Activated CD4-positive, alpha-beta memory T cell treated with anti-CD3 and anti-CD28 coated beads, Interleukin-2, amount 10 ng/mL, durations not matched to agents 7 days and 5 days (primary cell): ENCODE measurements at regions of chr12 and their contacts with region 1.

Region 1: GRCh38 chr12:31272607-31273225 is 53.2 kb downstream of the SINHCAF start:
- DNase-seq: no peak
- H3K4me3 Mint-ChIP-seq: no peak overlapping the region
- H3K27ac Mint-ChIP-seq: no peak overlapping the region
- H3K4me1 Mint-ChIP-seq: no peaks in the 10 kb centered on the region
- H3K27me3 Mint-ChIP-seq: no peaks in the 10 kb centered on the region

Region 2: GRCh38 chr12:30847259-30847658 is 425.5 kb before region 1 on chr12:
- CTCF ChIA-PET with region 1: interaction called, 43 read pairs
- POLR2A ChIA-PET with region 1: interaction called, 8 read pairs
- DNase-seq: peak; percentile 20
- H3K4me3 Mint-ChIP-seq: no peak overlapping the region
- H3K27ac Mint-ChIP-seq: no peak overlapping the region
- H3K4me1 Mint-ChIP-seq: peaks cover 6% of the 10 kb centered on the region
- H3K27me3 Mint-ChIP-seq: peaks cover 2% of the 10 kb centered on the region

Region 3: DNA sequence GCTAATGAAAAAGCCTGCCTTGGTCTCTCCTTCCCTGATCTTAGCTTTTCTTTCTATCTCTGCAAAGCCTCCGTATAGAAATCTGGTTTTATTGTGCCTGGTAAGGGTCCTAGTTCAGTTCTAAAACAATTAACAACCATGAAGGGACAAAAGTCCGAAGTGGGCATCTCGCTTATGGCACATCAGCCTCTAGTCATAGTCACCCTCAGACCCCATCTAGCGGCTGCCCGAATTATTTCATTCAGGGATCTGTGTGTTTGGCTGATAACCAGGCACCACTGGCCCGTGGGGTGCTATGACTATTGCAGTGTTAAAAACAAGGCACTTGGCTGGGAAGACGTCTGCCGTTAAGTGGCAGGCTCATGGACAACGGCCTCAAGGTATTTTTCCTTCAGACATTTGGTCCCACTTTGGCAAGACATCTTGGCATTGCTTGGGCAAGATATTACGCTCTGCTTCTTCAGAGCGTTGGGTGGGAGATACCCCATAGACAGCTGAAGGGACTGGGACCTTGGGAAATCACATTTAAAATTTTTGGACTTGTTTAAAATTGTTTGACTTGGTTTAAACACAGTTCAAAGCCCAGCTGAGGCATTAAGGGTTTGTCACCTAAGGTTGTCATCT is 33.8 kb before region 1 on chr12:
- CTCF ChIA-PET with region 1: interaction called, 18 read pairs
- POLR2A ChIA-PET with region 1: no interaction called
- DNase-seq: peak; percentile 75
- H3K4me3 Mint-ChIP-seq: no peak overlapping the region
- H3K27ac Mint-ChIP-seq: no peak overlapping the region
- H3K4me1 Mint-ChIP-seq: peaks cover 14% of the 10 kb centered on the region
- H3K27me3 Mint-ChIP-seq: peaks cover 36% of the 10 kb centered on the region

Region 4: DNA sequence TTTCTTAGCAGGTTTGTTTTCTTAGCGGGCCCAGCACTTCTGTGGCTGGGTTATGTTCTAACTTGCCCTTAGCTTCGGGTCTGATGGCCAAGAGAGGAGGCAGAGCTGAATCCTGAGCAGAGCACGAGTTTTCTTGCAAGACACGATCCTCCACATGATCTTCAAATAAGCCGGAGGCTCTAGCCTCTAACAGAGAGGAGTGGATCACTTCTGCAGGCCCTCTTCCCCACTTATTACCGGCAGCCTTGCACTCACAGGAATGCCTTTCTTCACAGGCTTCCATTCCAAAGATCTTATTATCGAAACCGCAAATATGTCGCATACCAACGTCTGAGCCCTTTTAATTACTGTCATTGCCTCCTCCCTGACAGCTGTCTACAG is 26.3 kb before region 1 on chr12:
- CTCF ChIA-PET with region 1: interaction called, 18 read pairs
- POLR2A ChIA-PET with region 1: no interaction called
- DNase-seq: no peak
- H3K4me3 Mint-ChIP-seq: no peak overlapping the region
- H3K27ac Mint-ChIP-seq: no peak overlapping the region
- H3K4me1 Mint-ChIP-seq: no peaks in the 10 kb centered on the region
- H3K27me3 Mint-ChIP-seq: peaks cover 2% of the 10 kb centered on the region

Region 5: DNA sequence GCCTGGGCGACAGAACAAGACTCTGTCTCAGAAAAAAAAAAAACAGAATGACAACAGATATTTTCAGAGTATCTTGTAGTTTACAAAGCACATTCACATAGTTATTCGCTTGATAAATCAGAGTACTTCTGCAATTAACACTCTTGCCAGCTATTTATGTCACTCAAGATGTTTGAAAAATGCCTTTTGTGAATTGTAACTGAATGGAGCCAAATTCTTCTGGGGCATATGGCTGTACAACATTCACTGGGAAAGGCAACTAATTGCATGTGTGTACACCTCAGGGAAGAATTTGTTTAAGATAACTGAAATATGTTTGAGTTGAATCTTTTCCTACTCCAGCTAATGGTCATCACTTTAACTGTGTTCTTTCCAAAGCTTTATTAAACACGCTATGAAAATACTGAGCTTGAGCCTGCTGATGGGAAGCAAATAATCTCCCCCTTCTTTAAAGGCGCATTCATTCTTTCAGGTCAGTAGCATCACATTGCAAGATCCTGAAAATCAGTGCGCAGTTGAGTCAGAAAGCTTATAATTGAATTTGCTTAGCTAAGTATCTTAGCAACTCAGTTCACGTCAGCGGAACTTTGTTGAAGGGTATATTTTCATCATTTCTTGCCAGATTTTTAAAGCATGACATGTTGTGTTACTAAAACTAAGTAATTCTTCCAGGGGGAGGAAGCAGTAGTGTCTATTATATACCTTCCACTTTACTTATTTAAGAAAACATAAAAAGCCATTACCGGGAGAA is 13.4 kb before region 1 on chr12:
- CTCF ChIA-PET with region 1: interaction called, 47 read pairs
- POLR2A ChIA-PET with region 1: no interaction called
- DNase-seq: no peak
- H3K4me3 Mint-ChIP-seq: no peak overlapping the region
- H3K27ac Mint-ChIP-seq: no peak overlapping the region
- H3K4me1 Mint-ChIP-seq: no peaks in the 10 kb centered on the region
- H3K27me3 Mint-ChIP-seq: peaks cover under 1% of the 10 kb centered on the region

Region 6: GRCh38 chr12:31297572-31298512 is 25.1 kb after region 1 on chr12:
- CTCF ChIA-PET with region 1: interaction called, 15 read pairs
- POLR2A ChIA-PET with region 1: interaction called, 4 read pairs
- DNase-seq: no peak
- H3K4me3 Mint-ChIP-seq: no peak overlapping the region
- H3K27ac Mint-ChIP-seq: no peak overlapping the region
- H3K4me1 Mint-ChIP-seq: peaks cover 15% of the 10 kb centered on the region
- H3K27me3 Mint-ChIP-seq: no peaks in the 10 kb centered on the region